ENCODE measurements at regions of chr1 and their contacts with region 1.

Region 1: GRCh38 chr1:24688621-24689195 is 45.6 kb downstream of the SRRM1 start:
- DNase-seq: peak; percentile 77
- H3K4me3 ChIP-seq: no peak overlapping the region; a peak in 1 of 4 replicates
- H3K27ac ChIP-seq: no peak overlapping the region
- H3K4me1 ChIP-seq: peaks cover 0 to 6% of the 10 kb centered on the region in 2 experiments; a peak in 1 of 4 replicates
- H3K27me3 ChIP-seq: no peaks in the 10 kb centered on the region
- CTCF ChIP-seq: peak; percentile 88
- EP300 ChIP-seq: no peak
- RAD21 ChIP-seq: peak; percentile 94

Region 2: GRCh38 chr1:24364975-24365678 is 323.6 kb before region 1 on chr1:
- CTCF ChIA-PET with region 1: no interaction called
- POLR2A ChIA-PET with region 1: no interaction called
- DNase-seq: peak; percentile 76
- H3K4me3 ChIP-seq: no peak overlapping the region
- H3K27ac ChIP-seq: peak overlapping the region; percentile 22 to 73; a peak in 3 of 4 replicates
- H3K4me1 ChIP-seq: peaks cover 11 to 15% of the 10 kb centered on the region in 2 experiments
- H3K27me3 ChIP-seq: no peaks in the 10 kb centered on the region
- CTCF ChIP-seq: no peak
- EP300 ChIP-seq: peak; percentile 25 to 53; a peak in 2 of 4 replicates
- RAD21 ChIP-seq: no peak

Region 3: GRCh38 chr1:24619376-24619775 is 69.3 kb before region 1 on chr1:
- CTCF ChIA-PET with region 1: no interaction called
- POLR2A ChIA-PET with region 1: no interaction called
- DNase-seq: no peak
- H3K4me3 ChIP-seq: no peak overlapping the region
- H3K27ac ChIP-seq: no peak overlapping the region
- H3K4me1 ChIP-seq: no peaks in the 10 kb centered on the region
- H3K27me3 ChIP-seq: no peaks in the 10 kb centered on the region; the same call in 1 of the 2 replicates
- CTCF ChIP-seq: no peak
- EP300 ChIP-seq: no peak
- RAD21 ChIP-seq: no peak

Region 4: GRCh38 chr1:24673336-24673735 is 15.4 kb before region 1 on chr1:
- CTCF ChIA-PET with region 1: interaction called, 17 read pairs
- POLR2A ChIA-PET with region 1: no interaction called
- DNase-seq: no peak
- H3K4me3 ChIP-seq: no peak overlapping the region
- H3K27ac ChIP-seq: peak overlapping the region in 1 of 2 experiments; percentile 57; a peak in 2 of 4 replicates
- H3K4me1 ChIP-seq: peaks cover 0 to 4% of the 10 kb centered on the region in 2 experiments; a peak in 1 of 4 replicates
- H3K27me3 ChIP-seq: no peaks in the 10 kb centered on the region
- CTCF ChIP-seq: no peak
- EP300 ChIP-seq: no peak
- RAD21 ChIP-seq: no peak

Region 5: GRCh38 chr1:24744911-24745710 is 56.4 kb after region 1 on chr1 and contains the start of gene CLIC4:
- CTCF ChIA-PET with region 1: interaction called, 12 read pairs
- POLR2A ChIA-PET with region 1: interaction called, 14 read pairs
- DNase-seq: peak; percentile 97
- H3K4me3 ChIP-seq: peak within 1 kb of the TSS; percentile 70 to 88
- H3K27ac ChIP-seq: peak within 1 kb of the TSS; percentile 79 to 85
- H3K4me1 ChIP-seq: peaks cover 10 to 21% of the 10 kb centered on the region in 2 experiments; a peak in 2 of 4 replicates
- H3K27me3 ChIP-seq: no peaks in the 10 kb centered on the region
- CTCF ChIP-seq: no peak
- EP300 ChIP-seq: peak in 1 of 2 experiments; percentile 72; a peak in 1 of 4 replicates
- RAD21 ChIP-seq: peak; percentile 39
- polyA plus RNA-seq, gene CLIC4: 66.4 and 84.4 TPM in 2 replicates

Region 6: DNA sequence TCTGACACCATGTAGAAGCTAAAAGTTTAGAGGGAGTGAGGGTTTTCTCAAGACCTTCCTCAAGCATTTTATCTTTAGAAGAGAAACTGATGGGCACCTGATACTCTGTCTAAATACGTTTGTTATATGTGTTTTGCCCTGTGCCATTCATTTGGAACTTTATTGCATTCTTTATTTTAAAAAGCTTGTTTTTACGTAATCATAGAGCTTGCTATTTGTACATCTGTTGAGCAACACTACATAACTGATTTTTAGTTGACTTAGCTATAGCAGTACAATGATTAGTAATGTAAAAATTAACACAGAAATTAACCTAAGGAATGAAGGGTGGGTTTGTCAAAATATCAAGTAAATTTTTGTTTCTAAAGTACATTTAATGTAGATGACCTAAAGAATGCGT is 152.9 kb after region 1 on chr1:
- CTCF ChIA-PET with region 1: interaction called, 79 read pairs
- POLR2A ChIA-PET with region 1: interaction called, 3 read pairs
- DNase-seq: no peak
- H3K4me3 ChIP-seq: no peak overlapping the region
- H3K27ac ChIP-seq: no peak overlapping the region
- H3K4me1 ChIP-seq: no peaks in the 10 kb centered on the region
- H3K27me3 ChIP-seq: no peaks in the 10 kb centered on the region
- CTCF ChIP-seq: no peak
- EP300 ChIP-seq: no peak
- RAD21 ChIP-seq: no peak

Region 7: DNA sequence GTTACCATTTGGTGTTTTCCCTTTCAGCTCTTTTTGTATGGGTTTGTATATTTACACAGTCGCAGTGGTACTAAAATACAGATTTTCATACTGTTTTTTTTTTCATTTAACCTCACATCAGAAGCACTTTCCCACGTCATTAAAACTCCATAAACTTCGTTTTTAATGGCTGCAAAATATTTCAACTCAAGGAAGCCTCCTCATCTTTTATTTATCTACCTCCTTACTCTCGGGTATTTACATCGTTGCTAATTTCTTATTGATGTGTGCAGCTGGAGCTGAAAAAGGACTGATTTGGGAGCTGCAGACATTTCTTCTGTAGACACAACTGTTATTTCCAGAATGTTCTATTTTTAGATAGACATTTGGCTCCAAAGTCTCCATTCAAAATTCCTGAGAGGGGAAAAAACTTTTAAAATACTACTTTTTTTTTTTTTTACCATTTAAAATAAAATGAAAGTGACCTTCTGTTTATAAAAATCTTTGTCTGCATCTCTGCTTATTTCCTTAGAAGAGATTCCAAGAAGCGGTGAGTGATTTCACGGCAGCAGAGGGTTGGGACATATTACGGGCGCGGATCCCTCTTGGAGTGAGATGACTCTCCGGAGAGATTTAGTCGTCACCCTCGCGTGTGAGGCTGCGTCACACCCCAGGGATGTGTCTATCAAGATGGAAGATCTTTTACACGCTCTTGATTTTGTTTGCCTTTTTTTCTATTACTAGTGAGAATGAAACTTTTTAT is 231.3 kb after region 1 on chr1:
- CTCF ChIA-PET with region 1: no interaction called
- POLR2A ChIA-PET with region 1: no interaction called
- DNase-seq: no peak
- H3K4me3 ChIP-seq: no peak overlapping the region
- H3K27ac ChIP-seq: no peak overlapping the region
- H3K4me1 ChIP-seq: no peaks in the 10 kb centered on the region; a peak in 1 of 4 replicates
- H3K27me3 ChIP-seq: peaks cover 17% of the 10 kb centered on the region
- CTCF ChIP-seq: no peak
- EP300 ChIP-seq: no peak
- RAD21 ChIP-seq: no peak

Region 8: DNA sequence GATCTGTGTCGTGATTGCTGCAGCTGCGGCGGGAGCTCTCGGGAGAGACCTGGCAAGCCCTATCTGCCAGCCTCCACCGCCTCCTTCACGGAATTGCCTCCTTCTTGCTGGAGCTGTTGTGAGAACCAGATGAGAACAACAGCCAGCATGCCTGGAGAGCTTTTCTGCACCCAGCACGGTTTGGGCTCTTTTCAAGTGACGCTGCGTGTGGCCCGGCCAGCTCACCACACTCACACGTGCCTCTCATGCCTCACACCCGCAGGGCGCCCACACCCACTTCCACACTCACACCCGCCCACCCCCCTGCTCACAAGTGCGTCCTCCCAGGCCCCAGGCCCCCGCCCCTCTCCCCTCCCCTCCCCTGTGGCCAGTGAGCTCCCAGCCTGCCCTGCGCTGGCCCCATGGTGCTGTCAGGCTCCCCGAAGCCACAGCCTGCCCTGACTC is 377.1 kb after region 1 on chr1:
- CTCF ChIA-PET with region 1: no interaction called
- POLR2A ChIA-PET with region 1: no interaction called
- DNase-seq: peak; percentile 74
- H3K4me3 ChIP-seq: no peak overlapping the region
- H3K27ac ChIP-seq: peak overlapping the region in 1 of 2 experiments; percentile 74; a peak in 2 of 4 replicates
- H3K4me1 ChIP-seq: peaks cover 0 to 36% of the 10 kb centered on the region in 2 experiments; a peak in 1 of 4 replicates
- H3K27me3 ChIP-seq: peaks cover 4% of the 10 kb centered on the region; the same call in 1 of the 2 replicates
- CTCF ChIP-seq: no peak
- EP300 ChIP-seq: no peak
- RAD21 ChIP-seq: no peak